A673 (cell line): ENCODE measurements at regions of chrX and their contacts with region 1.

Region 1: DNA sequence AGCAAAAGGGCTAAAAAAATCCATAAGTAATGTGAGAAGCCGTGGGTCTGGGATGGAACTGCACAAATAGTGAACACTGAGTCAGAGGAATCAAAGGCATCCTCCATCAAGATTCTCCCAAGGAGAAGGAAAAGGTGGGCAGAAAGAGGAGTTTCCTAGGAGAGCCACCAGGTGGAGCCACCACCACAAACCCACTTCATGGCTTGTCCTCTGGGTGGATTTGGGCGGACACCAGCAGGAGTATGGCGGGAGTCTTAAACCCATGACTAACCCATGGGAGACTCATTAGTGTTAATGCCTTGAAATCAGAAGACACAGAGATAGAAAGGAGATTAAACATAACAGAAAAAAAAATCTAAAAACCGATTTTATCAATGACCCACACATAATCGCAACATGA is 147.7 kb downstream of the SH3KBP1 start:
- DNase-seq: peak; percentile 77
- H3K4me3 ChIP-seq: no peak overlapping the region
- H3K27ac ChIP-seq: no peak overlapping the region
- H3K4me1 ChIP-seq: peaks cover 1% of the 10 kb centered on the region
- H3K27me3 ChIP-seq: no peaks in the 10 kb centered on the region
- CTCF ChIP-seq: peak; percentile 82

Region 2: GRCh38 chrX:19410259-19410658 is 329.4 kb before region 1 on chrX:
- CTCF ChIA-PET with region 1: no interaction called
- POLR2A ChIA-PET with region 1: no interaction called
- intact Hi-C with region 1: no loop called
- DNase-seq: no peak
- H3K4me3 ChIP-seq: no peak overlapping the region
- H3K27ac ChIP-seq: no peak overlapping the region
- H3K4me1 ChIP-seq: no peaks in the 10 kb centered on the region
- H3K27me3 ChIP-seq: peaks cover 4% of the 10 kb centered on the region
- CTCF ChIP-seq: no peak

Region 3: DNA sequence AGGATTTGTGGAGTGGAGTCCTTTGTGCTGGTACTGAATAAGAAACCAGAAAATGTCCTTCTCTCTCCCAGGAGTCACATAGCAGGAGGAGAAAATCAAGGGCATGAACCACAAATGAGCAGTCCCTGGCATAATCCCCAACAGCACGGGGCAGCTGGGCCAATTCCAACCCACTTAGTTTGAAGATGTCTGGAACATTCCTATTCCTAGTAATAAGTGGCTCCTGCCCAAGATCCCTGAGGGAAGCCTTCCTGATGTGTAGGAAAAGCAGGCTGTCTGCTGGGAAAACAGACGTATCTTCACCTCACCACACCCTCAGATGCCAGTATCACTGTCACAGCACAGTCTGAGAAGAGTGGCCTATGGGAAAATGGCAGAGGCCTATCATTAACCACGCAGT is 41.6 kb before region 1 on chrX:
- CTCF ChIA-PET with region 1: no interaction called
- POLR2A ChIA-PET with region 1: no interaction called
- intact Hi-C with region 1: no loop called
- DNase-seq: no peak
- H3K4me3 ChIP-seq: no peak overlapping the region
- H3K27ac ChIP-seq: no peak overlapping the region
- H3K4me1 ChIP-seq: no peaks in the 10 kb centered on the region
- H3K27me3 ChIP-seq: peaks cover 9% of the 10 kb centered on the region
- CTCF ChIP-seq: no peak

Region 4: DNA sequence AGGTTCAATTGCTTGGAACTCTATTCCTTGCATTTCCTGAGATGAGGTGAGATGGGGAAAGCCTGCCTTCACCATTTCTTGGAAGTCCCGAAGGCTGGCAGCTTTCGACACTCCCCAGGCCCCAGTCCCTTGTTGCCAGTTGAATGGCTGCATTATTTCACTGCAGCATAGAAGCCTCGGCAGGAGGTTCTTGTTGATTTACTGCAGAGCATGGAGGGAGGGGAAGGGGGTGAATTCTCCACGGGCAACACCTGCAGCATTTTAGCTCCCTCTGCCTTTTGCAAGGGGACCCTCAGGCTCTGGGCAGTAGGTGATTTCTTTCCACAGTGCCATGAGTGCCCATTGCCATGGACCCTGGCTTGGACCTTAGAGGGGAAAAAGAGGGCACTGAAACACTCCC is 261.9 kb after region 1 on chrX:
- CTCF ChIA-PET with region 1: no interaction called
- POLR2A ChIA-PET with region 1: no interaction called
- intact Hi-C with region 1: no loop called
- DNase-seq: no peak
- H3K4me3 ChIP-seq: no peak overlapping the region
- H3K27ac ChIP-seq: no peak overlapping the region
- H3K4me1 ChIP-seq: no peaks in the 10 kb centered on the region
- H3K27me3 ChIP-seq: no peaks in the 10 kb centered on the region
- CTCF ChIP-seq: no peak

Region 5: DNA sequence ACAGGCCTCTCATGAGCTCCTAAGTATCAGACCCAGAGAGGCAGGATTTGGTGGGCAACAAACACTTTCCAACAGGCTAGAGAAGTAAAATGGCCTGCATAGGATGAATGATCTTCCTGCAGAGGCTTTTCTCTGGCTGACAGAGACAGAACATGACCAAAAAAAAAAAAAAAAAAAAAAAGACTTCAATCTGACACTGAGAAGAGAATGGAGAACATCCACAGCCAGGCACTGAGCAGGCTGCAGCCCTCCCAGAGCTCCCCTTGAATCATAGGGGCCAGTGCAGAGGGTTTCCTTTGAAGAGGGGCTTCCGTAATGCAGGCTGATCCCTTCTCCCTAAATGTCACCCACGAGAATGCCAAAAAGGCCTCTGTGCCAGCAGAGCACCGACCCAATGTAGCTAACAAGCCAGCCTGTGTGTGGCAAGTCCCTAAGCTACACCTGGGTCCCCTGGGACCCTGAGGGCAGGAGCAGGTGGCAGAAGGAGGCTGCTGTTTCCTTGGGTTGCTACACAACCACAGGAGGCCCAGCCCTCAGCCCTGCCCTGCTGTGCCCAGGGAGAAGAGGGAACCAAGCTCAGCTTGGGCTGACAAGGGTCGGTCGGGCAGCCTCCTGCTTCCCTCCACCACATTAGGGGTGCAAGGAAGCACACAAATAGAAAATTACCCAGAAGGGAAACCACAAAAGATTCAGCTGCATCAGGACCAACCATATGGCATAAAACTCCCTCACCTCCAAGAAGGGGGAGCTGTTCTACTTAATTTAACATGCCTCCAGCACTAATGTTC is 321.5 kb after region 1 on chrX:
- CTCF ChIA-PET with region 1: no interaction called
- POLR2A ChIA-PET with region 1: no interaction called
- intact Hi-C with region 1: loop called (anchors 5 kb)
- DNase-seq: no peak
- H3K4me3 ChIP-seq: no peak overlapping the region
- H3K27ac ChIP-seq: no peak overlapping the region
- H3K4me1 ChIP-seq: no peaks in the 10 kb centered on the region
- H3K27me3 ChIP-seq: no peaks in the 10 kb centered on the region
- CTCF ChIP-seq: no peak